Esophagus muscularis mucosa (tissue), 4 donors: ENCODE measurements at regions of chr6 and their contacts with region 1.

Region 1: GRCh38 chr6:42928986-42929820 is at the start of gene CNPY3:
- DNase-seq: peak; percentile 98
- H3K4me3 ChIP-seq: peak within 1 kb of the TSS; percentile 66 to 87 (median 78)
- H3K27ac ChIP-seq: peak within 1 kb of the TSS; percentile 87 to 97 (median 90)
- H3K4me1 ChIP-seq: peaks cover 14 to 46% (median 45%) of the 10 kb centered on the region in 4 donors
- H3K27me3 ChIP-seq: peaks cover 0 to 17% (median 0%) of the 10 kb centered on the region in 4 donors
- CTCF ChIP-seq: no peak
- EP300 ChIP-seq: no peak
- POLR2A ChIP-seq: peak; percentile 32
- total RNA-seq, gene CNPY3: 24.5 to 39.6 (median 34.3) TPM

Region 2: DNA sequence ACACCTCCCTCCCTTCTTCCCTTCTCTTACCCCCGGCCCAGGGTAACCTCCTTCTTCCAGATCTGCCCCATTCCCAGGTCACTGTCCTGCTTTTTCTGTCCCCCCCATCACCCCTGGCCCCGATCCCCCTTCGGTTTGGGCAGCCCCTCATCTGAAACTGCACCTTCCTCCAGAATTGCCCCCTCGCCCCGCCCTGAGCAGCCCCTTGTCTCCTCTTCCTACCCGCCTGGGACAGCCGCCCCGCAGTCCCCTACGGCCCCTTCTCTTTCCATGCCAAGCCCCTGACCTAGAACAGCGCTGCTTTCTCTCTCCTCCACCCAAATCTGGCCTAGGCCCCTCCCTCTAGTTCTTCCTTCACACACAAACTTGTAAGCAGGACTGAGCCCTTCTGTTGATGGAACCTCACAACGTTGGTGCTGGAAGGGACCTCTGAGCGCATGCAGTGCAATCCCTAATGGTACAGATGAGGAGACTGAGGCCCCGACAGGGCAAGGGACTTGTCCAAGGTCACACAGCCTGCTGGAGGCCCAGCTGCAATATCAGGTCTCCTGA is 55.8 kb after region 1 on chr6:
- intact Hi-C with region 1: loop called (anchors 5 kb)
- DNase-seq: no peak
- H3K4me3 ChIP-seq: peak overlapping the region; percentile 83 to 96 (median 91)
- H3K27ac ChIP-seq: peak overlapping the region; percentile 91 to 95 (median 92)
- H3K4me1 ChIP-seq: peaks cover 44 to 70% (median 54%) of the 10 kb centered on the region in 4 donors
- H3K27me3 ChIP-seq: no peaks in the 10 kb centered on the region
- CTCF ChIP-seq: no peak
- EP300 ChIP-seq: no peak
- POLR2A ChIP-seq: no peak